CD4-positive, alpha-beta T cell (primary cell): ENCODE measurements at regions of chr13 and their contacts with region 1.

Region 1: DNA sequence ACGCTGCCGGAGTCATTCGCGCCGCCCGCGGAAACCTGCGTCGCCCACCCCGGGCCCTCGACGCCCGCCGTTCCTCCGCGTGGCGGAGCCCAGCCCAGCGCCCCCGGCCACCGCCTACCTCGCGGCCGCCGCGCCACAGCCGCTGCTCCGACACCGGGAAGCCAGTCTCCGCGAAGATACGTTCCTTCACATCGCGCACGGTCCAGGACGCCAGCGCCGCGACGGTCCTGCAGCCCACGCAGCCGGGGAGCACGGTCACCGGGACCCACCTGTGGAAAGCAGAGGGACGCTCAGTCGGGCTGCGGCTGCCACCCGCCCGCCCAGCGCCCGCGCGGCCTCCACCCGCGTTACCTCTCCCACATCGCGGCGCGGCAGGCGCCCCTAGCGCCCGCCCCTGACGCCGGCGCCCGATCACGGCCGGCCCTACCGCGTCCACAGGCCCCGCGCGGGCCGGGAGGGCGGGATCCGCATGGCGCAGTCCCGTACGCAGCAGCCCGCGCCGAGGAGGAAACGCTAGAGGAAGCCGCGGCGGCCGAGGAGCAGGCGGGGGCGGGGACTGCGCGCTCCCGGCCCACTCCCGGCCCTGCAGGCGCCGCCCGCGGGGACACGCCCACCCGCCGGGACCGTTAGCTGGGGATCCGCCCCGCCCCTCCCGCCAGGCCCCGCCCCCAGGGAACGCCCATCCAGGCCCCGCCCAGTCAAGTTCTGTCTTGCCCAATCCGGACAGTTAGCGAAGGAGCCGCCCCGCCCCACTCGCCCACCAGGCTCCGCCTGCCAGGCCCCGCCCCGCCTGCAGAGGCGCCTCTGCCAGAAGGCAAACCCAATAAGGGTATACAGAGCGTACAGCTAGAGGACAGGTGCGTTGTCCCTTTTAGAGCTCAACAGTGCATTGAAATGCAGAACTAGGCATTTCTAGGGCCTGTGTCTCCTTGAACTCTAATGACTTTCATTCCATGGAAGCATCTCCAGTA is 58.2 kb downstream of the SACS start:
- DNase-seq: peak; percentile 95 to 99 (median 98)
- ATAC-seq: peak; percentile 87
- H3K4me3 ChIP-seq: peak overlapping the region; percentile 56
- H3K4me3 Mint-ChIP-seq: peak overlapping the region; percentile 82
- H3K27ac ChIP-seq: no peak overlapping the region
- H3K27ac Mint-ChIP-seq: peak overlapping the region; percentile 61
- H3K4me1 ChIP-seq: peaks cover 48% of the 10 kb centered on the region
- H3K4me1 Mint-ChIP-seq: peaks cover 73% of the 10 kb centered on the region
- H3K27me3 ChIP-seq: no peaks in the 10 kb centered on the region
- H3K27me3 Mint-ChIP-seq: no peaks in the 10 kb centered on the region
- CTCF ChIP-seq: peak; percentile 8

Region 2: GRCh38 chr13:21458813-21459701 is 1916.2 kb before region 1 on chr13 and contains the start of gene ZDHHC20:
- CTCF ChIA-PET with region 1: no interaction called
- POLR2A ChIA-PET with region 1: no interaction called
- intact Hi-C with region 1: loop called in 1 of 2 experiments (anchors 10 kb)
- DNase-seq: peak; percentile 75 to 95 (median 88)
- ATAC-seq: peak; percentile 85
- H3K4me3 ChIP-seq: peak within 1 kb of the TSS; percentile 90
- H3K4me3 Mint-ChIP-seq: peak within 1 kb of the TSS; percentile 97
- H3K27ac ChIP-seq: peak within 1 kb of the TSS; percentile 56 to 84
- H3K27ac Mint-ChIP-seq: peak within 1 kb of the TSS; percentile 92
- H3K4me1 ChIP-seq: peaks cover 12% of the 10 kb centered on the region
- H3K4me1 Mint-ChIP-seq: peaks cover 42% of the 10 kb centered on the region
- H3K27me3 ChIP-seq: no peaks in the 10 kb centered on the region
- H3K27me3 Mint-ChIP-seq: no peaks in the 10 kb centered on the region
- CTCF ChIP-seq: no peak
- total RNA-seq, gene ZDHHC20: 62.8 to 65.1 TPM

Region 3: DNA sequence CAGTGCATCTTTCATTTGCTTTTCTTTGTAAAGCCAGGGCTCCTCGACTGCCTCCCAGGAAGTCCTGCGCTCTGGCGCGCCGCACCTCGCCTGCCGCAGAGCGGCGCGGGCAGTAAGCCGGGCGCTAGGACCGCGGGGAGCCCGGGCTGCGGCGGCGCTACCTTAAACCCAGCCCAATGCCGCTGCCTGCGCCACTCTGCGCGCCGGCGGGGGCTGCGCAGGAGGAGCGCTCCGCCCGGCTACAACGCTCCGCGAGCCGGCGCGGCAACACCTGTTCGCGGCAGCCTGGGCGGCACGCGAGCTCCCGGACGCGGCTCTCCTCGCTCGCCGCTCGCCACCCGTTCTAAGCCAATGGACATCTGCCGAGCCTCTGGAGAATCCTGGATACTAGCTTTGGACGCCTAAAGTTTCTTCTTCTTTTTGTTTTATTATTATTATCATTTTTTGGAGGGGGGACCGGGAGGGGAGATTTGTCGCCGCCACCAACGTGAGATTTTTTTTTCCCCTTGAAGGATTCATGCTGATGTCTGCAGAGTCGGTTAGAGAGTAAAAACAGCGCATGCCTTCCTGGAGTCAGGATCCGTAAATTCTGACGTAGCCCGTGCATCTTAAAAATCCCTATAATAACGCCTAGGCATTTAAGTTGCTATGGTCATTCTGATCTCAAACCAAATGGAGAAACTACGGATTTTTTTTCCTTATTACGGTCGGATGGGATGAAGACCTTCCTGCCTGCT is 1704.2 kb before region 1 on chr13 and contains the start of gene FGF9:
- CTCF ChIA-PET with region 1: no interaction called
- POLR2A ChIA-PET with region 1: no interaction called
- intact Hi-C with region 1: loop called in 1 of 2 experiments (anchors 10 kb)
- DNase-seq: peak; percentile 59 to 93 (median 74)
- ATAC-seq: peak; percentile 72
- H3K4me3 ChIP-seq: peak within 1 kb of the TSS; percentile 81
- H3K4me3 Mint-ChIP-seq: peak within 1 kb of the TSS; percentile 92
- H3K27ac ChIP-seq: peak within 1 kb of the TSS in 1 of 2 donors; percentile 2
- H3K27ac Mint-ChIP-seq: peak within 1 kb of the TSS; percentile 77
- H3K4me1 ChIP-seq: peaks cover 62% of the 10 kb centered on the region
- H3K4me1 Mint-ChIP-seq: peaks cover 45% of the 10 kb centered on the region
- H3K27me3 ChIP-seq: peaks cover 18 to 21% of the 10 kb centered on the region in 2 experiments
- H3K27me3 Mint-ChIP-seq: peaks cover 43% of the 10 kb centered on the region
- CTCF ChIP-seq: no peak
- total RNA-seq, gene FGF9: 2.2 to 3.4 TPM

Region 4: DNA sequence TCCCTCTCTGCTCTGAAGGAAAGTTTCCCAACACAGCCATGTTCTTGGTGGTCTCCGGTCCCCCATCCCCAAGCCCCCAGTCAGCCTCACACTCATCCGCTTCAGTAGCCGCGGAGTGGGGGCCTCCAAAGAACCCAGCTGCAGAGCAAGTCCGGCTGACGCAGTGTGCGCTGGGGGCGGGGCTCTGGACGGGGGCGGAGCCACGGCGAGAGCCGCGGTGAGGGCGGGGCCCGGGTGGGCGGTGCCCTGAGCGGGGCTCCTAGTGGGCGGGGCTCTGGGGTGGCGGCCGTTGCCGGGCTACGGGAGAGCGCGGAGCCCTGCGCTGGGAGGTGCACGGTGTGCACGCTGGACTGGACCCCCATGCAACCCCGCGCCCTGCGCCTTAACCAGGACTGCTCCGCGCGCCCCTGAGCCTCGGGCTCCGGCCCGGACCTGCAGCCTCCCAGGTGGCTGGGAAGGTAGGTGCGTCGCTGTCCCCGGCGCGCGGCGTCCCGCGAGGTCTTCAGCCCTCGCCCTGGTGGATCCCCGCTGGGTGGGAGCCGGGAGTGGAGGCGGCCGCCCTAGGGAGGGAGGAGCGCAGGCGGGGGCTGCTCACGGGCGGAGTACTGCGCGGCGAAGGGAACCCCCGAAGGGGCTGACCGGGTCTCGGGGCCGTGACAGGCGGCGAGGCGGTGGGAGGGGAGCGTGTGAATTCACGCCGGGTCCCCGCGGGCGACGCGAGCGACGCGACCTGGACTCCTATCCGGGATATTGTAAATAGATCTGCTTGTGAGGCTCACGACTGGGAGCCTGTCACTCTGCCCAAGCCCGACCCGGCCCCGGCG is 204.0 kb after region 1 on chr13:
- CTCF ChIA-PET with region 1: no interaction called
- POLR2A ChIA-PET with region 1: no interaction called
- intact Hi-C with region 1: loop called (anchors 2 kb)
- DNase-seq: peak; percentile 82 to 95 (median 90)
- ATAC-seq: peak; percentile 94
- H3K4me3 ChIP-seq: peak overlapping the region; percentile 70
- H3K4me3 Mint-ChIP-seq: peak overlapping the region; percentile 87
- H3K27ac ChIP-seq: peak overlapping the region in 1 of 2 donors; percentile 56
- H3K27ac Mint-ChIP-seq: no peak overlapping the region
- H3K4me1 ChIP-seq: peaks cover 18% of the 10 kb centered on the region
- H3K4me1 Mint-ChIP-seq: peaks cover 22% of the 10 kb centered on the region
- H3K27me3 ChIP-seq: peaks cover 10 to 37% of the 10 kb centered on the region in 2 experiments
- H3K27me3 Mint-ChIP-seq: peaks cover 68% of the 10 kb centered on the region
- CTCF ChIP-seq: no peak

Region 5: GRCh38 chr13:24160454-24161009 is 785.2 kb after region 1 on chr13 and contains the start of gene SPATA13:
- CTCF ChIA-PET with region 1: no interaction called
- POLR2A ChIA-PET with region 1: no interaction called
- intact Hi-C with region 1: loop called in 1 of 2 experiments (anchors 5 kb)
- DNase-seq: peak; percentile 89 to 99 (median 94)
- ATAC-seq: peak; percentile 92
- H3K4me3 ChIP-seq: peak within 1 kb of the TSS; percentile 81
- H3K4me3 Mint-ChIP-seq: peak within 1 kb of the TSS; percentile 90
- H3K27ac ChIP-seq: no peak within 1 kb of the TSS
- H3K27ac Mint-ChIP-seq: peak within 1 kb of the TSS; percentile 74
- H3K4me1 ChIP-seq: peaks cover 18% of the 10 kb centered on the region
- H3K4me1 Mint-ChIP-seq: peaks cover 14% of the 10 kb centered on the region
- H3K27me3 ChIP-seq: no peaks in the 10 kb centered on the region
- H3K27me3 Mint-ChIP-seq: no peaks in the 10 kb centered on the region
- CTCF ChIP-seq: no peak
- total RNA-seq, gene SPATA13: 87.7 to 94.6 TPM

Region 6: GRCh38 chr13:24922745-24923591 is 1547.7 kb after region 1 on chr13:
- CTCF ChIA-PET with region 1: no interaction called
- POLR2A ChIA-PET with region 1: no interaction called
- intact Hi-C with region 1: loop called in 1 of 2 experiments (anchors 10 kb)
- DNase-seq: peak; percentile 84 to 97 (median 90)
- ATAC-seq: peak; percentile 98
- H3K4me3 ChIP-seq: peak overlapping the region; percentile 91
- H3K4me3 Mint-ChIP-seq: peak overlapping the region; percentile 91
- H3K27ac ChIP-seq: peak overlapping the region; percentile 70 to 93
- H3K27ac Mint-ChIP-seq: peak overlapping the region; percentile 90
- H3K4me1 ChIP-seq: peaks cover 5% of the 10 kb centered on the region
- H3K4me1 Mint-ChIP-seq: peaks cover 18% of the 10 kb centered on the region
- H3K27me3 ChIP-seq: peaks cover 0 to under 1% of the 10 kb centered on the region in 2 experiments
- H3K27me3 Mint-ChIP-seq: no peaks in the 10 kb centered on the region
- CTCF ChIP-seq: no peak